Activated CD8-positive, alpha-beta T cell treated with anti-CD3 and anti-CD28 coated beads for 36 hours (primary cell): ENCODE measurements at regions of chr15 and their contacts with region 1.

Region 1: GRCh38 chr15:90648137-90649070 is 68.7 kb upstream of the BLM start:
- DNase-seq: peak; percentile 89
- ATAC-seq: peak; percentile 82
- H3K4me3 Mint-ChIP-seq: peak overlapping the region; percentile 44
- H3K27ac Mint-ChIP-seq: peak overlapping the region; percentile 87
- H3K4me1 Mint-ChIP-seq: peaks cover 27% of the 10 kb centered on the region
- H3K27me3 Mint-ChIP-seq: no peaks in the 10 kb centered on the region
- CTCF ChIP-seq: peak; percentile 97

Region 2: DNA sequence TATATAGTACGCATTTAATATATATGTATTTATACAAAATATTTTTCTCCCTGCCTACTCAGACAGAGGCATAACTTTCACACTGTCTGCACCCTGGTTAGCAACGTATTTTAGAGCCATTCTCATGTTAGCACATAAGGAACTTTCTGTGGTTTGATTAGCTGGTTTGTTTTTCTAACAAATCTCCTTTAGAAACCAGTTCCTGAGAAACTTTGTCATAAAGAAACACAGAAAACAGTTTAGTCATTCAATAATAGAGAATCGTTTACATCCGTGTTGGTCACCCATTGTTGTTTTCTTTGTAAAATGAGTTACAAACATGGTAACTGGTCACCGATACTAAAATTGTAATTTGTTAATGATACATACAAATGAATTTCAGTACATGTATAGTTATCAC is 388.9 kb before region 1 on chr15:
- CTCF ChIA-PET with region 1: no interaction called
- POLR2A ChIA-PET with region 1: no interaction called
- intact Hi-C with region 1: no loop called
- DNase-seq: no peak
- ATAC-seq: peak; percentile 78
- H3K4me3 Mint-ChIP-seq: no peak overlapping the region
- H3K27ac Mint-ChIP-seq: no peak overlapping the region
- H3K4me1 Mint-ChIP-seq: peaks cover 8% of the 10 kb centered on the region
- H3K27me3 Mint-ChIP-seq: no peaks in the 10 kb centered on the region
- CTCF ChIP-seq: no peak

Region 3: DNA sequence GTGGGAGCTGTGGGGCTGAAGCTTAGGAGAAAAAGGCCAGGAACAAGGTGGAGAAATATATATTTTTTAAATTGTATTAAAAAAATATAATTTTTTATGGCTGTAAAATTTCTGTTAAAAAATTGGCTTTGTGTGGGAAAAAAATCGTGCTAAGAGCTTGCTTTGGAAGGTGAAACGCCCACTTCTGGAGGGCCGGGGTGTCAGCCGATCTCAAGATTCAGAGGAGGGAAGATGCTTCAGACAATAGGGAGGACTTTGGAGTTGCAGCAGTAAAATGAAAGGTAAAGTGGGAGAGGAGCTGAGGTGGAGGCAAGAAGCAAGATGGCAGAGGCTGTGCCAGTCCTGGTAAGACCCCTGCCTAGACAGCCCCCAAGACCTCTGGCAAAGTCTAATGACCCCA is 22.8 kb after region 1 on chr15:
- CTCF ChIA-PET with region 1: interaction called, 24 read pairs
- POLR2A ChIA-PET with region 1: interaction called, 3 read pairs
- intact Hi-C with region 1: no loop called
- DNase-seq: no peak
- ATAC-seq: no peak
- H3K4me3 Mint-ChIP-seq: no peak overlapping the region
- H3K27ac Mint-ChIP-seq: no peak overlapping the region
- H3K4me1 Mint-ChIP-seq: peaks cover 10% of the 10 kb centered on the region
- H3K27me3 Mint-ChIP-seq: peaks cover 8% of the 10 kb centered on the region
- CTCF ChIP-seq: no peak

Region 4: DNA sequence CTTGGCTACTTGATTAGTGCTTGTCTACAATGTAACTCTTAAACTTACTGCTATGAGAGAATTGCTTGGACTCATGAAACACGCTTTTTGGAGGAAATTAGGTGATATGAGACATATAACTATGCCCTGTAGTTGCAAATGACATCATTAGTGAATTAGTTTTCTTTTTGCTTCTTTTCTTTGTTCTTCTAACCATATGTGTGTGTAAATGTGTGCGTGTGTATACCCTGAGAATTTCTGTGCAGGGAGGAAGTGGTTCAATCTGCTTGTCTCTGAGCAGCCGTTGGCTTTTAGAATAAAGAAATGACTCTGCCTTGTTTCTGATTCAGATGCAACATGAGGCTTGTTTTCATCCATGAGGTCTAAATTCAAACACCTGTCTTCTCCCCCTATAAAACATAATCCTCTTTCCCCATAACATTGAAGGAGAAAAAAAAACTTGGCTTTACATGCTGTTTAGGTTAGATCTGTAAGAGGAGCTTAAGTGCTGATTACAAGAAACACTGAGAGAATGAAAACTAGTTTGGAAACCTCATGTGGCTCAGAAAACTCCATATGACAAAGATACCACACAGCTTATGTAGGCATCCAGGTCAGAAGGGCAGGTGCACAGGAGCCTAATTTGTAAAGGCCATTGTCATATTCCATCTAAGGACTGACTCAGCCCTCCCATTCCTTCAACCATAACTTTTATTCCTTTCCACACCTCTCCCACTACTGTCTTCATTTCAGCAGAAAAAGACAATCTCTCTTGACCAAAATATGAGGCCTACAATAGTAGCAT is 38.2 kb after region 1 on chr15:
- CTCF ChIA-PET with region 1: interaction called, 16 read pairs
- POLR2A ChIA-PET with region 1: interaction called, 3 read pairs
- intact Hi-C with region 1: no loop called
- DNase-seq: peak; percentile 60
- ATAC-seq: peak; percentile 95
- H3K4me3 Mint-ChIP-seq: peak overlapping the region; percentile 25
- H3K27ac Mint-ChIP-seq: peak overlapping the region; percentile 97
- H3K4me1 Mint-ChIP-seq: peaks cover 35% of the 10 kb centered on the region
- H3K27me3 Mint-ChIP-seq: no peaks in the 10 kb centered on the region
- CTCF ChIP-seq: no peak

Region 5: DNA sequence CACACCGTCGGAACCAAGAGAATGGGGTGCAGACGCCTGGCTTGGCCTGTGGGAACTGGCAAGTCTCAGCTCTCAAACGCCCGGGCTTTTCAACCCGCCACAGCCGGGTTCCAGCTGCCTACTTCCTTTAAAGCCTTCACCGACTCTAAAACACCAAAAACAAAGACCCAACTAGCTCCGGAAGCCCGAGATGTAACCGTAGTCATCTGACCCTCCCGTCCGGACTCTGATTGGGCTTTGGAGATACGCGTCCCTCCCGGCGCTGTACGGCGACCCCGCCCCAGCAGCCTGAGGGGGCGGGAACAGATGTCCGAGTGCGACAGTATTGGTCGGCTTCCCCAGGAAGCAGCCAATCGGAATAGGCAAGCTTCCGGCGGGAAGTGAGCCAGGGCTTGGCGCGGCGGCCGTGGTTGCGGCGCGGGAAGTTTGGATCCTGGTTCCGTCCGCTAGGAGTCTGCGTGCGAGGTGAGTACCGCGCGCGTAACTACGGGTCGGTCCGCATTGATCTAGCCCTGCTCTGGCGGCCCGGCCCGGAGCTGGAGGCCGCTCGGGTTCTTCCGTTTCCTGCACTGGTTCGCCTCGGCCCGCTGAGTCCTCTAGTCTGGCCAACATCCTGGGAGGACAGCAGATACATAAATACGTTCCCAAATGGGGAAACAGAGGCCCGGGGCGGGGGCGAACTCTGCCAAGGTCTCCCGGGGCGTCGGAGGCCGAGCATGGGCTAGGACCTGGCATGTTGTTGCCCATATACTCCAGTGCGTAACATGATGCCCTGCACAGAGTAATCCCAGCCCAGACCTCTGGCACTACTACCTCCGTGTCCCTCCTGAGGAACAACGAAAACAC is 68.8 kb after region 1 on chr15 and contains the start of gene BLM:
- CTCF ChIA-PET with region 1: interaction called, 10 read pairs
- POLR2A ChIA-PET with region 1: interaction called, 4 read pairs
- intact Hi-C with region 1: no loop called
- DNase-seq: peak; percentile 96
- ATAC-seq: peak; percentile 100
- H3K4me3 Mint-ChIP-seq: peak within 1 kb of the TSS; percentile 84
- H3K27ac Mint-ChIP-seq: peak within 1 kb of the TSS; percentile 96
- H3K4me1 Mint-ChIP-seq: peaks cover 18% of the 10 kb centered on the region
- H3K27me3 Mint-ChIP-seq: no peaks in the 10 kb centered on the region
- CTCF ChIP-seq: no peak
- total RNA-seq, gene BLM: 45.2 to 53.6 TPM